Mammary epithelial cell (primary cell): ENCODE measurements at regions of chr1 and their contacts with region 1.

Region 1: DNA sequence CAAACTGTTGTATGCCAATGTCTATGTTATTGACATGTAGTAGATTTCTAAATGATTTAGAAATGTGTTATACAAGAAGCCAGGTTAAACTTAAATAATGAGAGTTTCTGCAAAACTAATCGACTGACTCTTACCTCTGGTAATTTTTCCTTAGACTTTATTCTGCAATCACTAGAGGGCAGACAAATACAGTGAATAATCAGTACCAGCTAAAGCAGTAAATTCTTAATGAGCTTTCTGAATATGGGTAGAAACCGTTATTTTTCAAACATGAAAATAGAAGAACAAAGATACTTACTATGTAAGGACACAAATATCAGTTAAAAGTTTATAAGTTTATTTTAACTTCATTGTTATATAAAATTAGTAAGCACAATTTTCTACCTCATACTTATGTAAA is 97.9 kb upstream of the RGS1 start:
- DNase-seq: peak; percentile 6
- H3K4me3 ChIP-seq: no peak overlapping the region
- H3K27ac ChIP-seq: no peak overlapping the region
- H3K4me1 ChIP-seq: no peaks in the 10 kb centered on the region
- H3K27me3 ChIP-seq: peaks cover 3% of the 10 kb centered on the region
- CTCF ChIP-seq: peak; percentile 29 to 49

Region 2: GRCh38 chr1:192580351-192580962 is 102.8 kb after region 1 on chr1:
- CTCF ChIA-PET with region 1: no interaction called
- dilution Hi-C with region 1: no loop called
- in situ Hi-C with region 1: loop called in 1 of 2 experiments (anchors 10 kb)
- intact Hi-C with region 1: loop called (anchors 1 kb)
- DNase-seq: peak; percentile 50
- H3K4me3 ChIP-seq: no peak overlapping the region
- H3K27ac ChIP-seq: no peak overlapping the region
- H3K4me1 ChIP-seq: no peaks in the 10 kb centered on the region
- H3K27me3 ChIP-seq: no peaks in the 10 kb centered on the region
- CTCF ChIP-seq: peak; percentile 27 to 60

Region 3: DNA sequence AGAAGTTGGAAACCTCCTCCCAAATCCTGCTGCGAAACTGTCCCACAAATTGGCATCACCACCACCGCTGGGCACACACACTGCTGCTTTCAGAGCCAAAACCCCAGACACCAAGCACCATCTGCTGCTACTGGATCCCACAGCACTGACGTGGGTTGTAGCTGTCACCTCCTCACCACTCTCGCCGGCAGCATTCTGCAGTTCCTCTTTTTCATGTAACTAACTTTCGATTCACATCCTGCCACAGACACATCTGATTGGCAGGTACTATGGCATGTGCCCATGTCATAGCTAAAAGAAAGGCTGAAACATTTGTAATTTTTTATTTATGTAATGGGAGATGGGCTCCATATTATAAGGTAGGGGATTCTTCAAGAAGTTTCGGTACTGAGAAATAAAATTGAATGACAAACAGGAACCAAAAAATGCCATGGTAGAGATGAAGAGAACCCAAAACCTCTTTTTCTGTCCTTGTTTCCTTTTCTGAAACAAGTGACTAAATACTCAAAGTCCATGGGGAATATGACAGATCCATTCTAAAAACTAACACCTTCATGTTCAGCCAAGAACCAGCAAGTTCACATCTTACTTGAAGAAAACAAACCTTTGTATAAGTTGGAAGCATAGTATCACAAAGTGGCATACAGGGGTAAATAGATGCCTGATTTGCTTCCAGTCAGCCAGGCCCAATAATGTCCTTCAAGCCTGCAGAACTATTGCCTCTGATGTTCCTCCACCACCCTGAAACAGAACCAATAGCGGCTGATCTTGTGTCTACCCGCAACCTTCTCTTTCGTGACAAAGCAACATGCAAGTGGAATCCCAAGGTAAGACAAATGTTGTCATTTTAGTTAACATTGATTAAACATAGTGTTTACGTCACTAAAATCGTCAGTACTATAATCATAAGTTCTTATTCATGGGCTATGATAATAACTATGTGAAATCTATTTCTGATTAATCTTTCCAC is 131.8 kb after region 1 on chr1:
- CTCF ChIA-PET with region 1: interaction called, 9 read pairs
- dilution Hi-C with region 1: no loop called
- in situ Hi-C with region 1: loop called in 1 of 2 experiments (anchors 5 kb)
- intact Hi-C with region 1: loop called (anchors 1 kb)
- DNase-seq: no peak
- H3K4me3 ChIP-seq: no peak overlapping the region
- H3K27ac ChIP-seq: no peak overlapping the region
- H3K4me1 ChIP-seq: no peaks in the 10 kb centered on the region
- H3K27me3 ChIP-seq: peaks cover 3% of the 10 kb centered on the region
- CTCF ChIP-seq: no peak

Region 4: DNA sequence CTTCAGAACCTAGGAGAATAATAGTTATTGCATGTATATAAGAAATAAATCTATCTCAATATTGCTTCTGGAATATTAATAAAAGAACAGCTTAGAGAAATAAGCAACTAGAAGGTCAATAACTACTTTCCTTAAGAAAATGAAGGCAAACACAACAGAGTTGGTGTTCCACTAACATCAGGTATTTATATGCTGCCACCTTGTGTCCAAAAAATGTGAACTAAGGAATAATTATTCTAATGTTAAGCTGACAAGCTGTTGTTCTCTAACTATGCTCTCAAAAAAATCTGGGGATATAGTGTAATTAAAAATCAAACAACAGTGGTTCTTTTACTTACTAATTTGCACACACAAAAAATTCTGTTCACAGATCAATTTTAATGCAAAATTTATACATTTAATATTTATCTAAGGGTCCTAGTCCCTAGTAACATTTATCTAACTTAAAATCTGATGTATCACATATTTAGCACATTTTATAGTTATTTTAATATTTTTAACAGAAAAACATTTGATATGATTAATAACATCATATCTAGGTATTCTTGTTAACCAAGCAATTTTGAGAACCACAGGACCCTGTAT is 541.9 kb after region 1 on chr1:
- CTCF ChIA-PET with region 1: no interaction called
- dilution Hi-C with region 1: no loop called
- in situ Hi-C with region 1: no loop called
- intact Hi-C with region 1: loop called (anchors 5 kb)
- DNase-seq: peak; percentile 39
- H3K4me3 ChIP-seq: no peak overlapping the region
- H3K27ac ChIP-seq: no peak overlapping the region
- H3K4me1 ChIP-seq: no peaks in the 10 kb centered on the region
- H3K27me3 ChIP-seq: no peaks in the 10 kb centered on the region
- CTCF ChIP-seq: peak; percentile 33 to 53

Region 5: DNA sequence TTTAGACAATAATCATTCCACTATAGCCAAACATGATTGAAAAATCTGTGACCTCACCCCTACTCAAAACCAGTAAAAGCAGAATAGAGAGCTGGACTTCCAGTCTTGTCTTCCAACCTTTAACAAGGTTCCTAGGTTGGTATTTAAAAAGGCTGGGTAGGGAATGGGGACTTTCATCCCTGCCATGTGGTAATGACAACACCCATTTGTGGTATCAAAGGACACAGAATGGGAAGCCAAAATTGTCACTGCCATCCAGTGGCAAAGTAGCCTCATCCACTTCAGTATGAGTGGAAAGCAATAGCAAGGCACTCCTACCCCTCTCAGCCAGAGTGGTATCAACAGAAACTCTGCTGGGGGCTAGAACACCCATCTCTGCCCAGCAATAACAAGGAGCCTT is 547.6 kb after region 1 on chr1:
- CTCF ChIA-PET with region 1: interaction called, 3 read pairs
- dilution Hi-C with region 1: no loop called
- in situ Hi-C with region 1: loop called (anchors 25 kb)
- intact Hi-C with region 1: loop called (anchors 5 kb)
- DNase-seq: no peak
- H3K4me3 ChIP-seq: no peak overlapping the region
- H3K27ac ChIP-seq: no peak overlapping the region
- H3K4me1 ChIP-seq: no peaks in the 10 kb centered on the region
- H3K27me3 ChIP-seq: no peaks in the 10 kb centered on the region
- CTCF ChIP-seq: no peak

Region 6: DNA sequence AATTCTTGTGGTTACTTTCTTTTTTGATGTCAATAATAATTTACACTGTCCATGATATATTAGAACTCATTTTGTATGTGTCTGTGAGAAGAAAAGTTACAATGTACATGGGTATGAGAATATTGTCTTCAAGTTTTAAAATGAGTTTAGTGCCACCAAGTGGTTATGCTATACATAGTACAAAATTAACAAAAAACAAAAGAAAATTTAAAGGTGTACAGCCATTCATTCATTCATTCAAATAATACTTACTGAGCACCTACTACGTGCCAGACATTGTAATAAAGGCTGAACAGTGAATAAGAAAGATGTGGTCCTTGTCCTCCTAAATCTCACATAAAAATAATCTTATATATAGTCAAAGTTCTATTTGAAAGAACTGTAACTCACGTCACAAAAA is 553.8 kb after region 1 on chr1:
- CTCF ChIA-PET with region 1: interaction called, 3 read pairs
- dilution Hi-C with region 1: no loop called
- in situ Hi-C with region 1: loop called (anchors 25 kb)
- intact Hi-C with region 1: loop called (anchors 5 kb)
- DNase-seq: no peak
- H3K4me3 ChIP-seq: no peak overlapping the region
- H3K27ac ChIP-seq: no peak overlapping the region
- H3K4me1 ChIP-seq: no peaks in the 10 kb centered on the region
- H3K27me3 ChIP-seq: no peaks in the 10 kb centered on the region
- CTCF ChIP-seq: peak; percentile 16 to 41

Region 7: GRCh38 chr1:193121616-193122593 is 644.3 kb after region 1 on chr1 and contains the start of gene CDC73:
- CTCF ChIA-PET with region 1: interaction called, 4 read pairs
- dilution Hi-C with region 1: no loop called
- in situ Hi-C with region 1: no loop called
- intact Hi-C with region 1: loop called (anchors 10 kb)
- DNase-seq: peak; percentile 97
- H3K4me3 ChIP-seq: peak within 1 kb of the TSS; percentile 90 to 97 (median 93)
- H3K27ac ChIP-seq: peak within 1 kb of the TSS; percentile 86
- H3K4me1 ChIP-seq: peaks cover 3% of the 10 kb centered on the region
- H3K27me3 ChIP-seq: no peaks in the 10 kb centered on the region
- CTCF ChIP-seq: peak; percentile 78 to 95
- total RNA-seq, gene CDC73: 27.5 to 58.3 TPM